Activated CD4-positive, alpha-beta T cell treated with anti-CD3 and anti-CD28 coated beads for 36 hours (primary cell): ENCODE measurements at regions of chr6 and their contacts with region 1.

Region 1: GRCh38 chr6:159325476-159325875 is 156.3 kb downstream of the FNDC1 start:
- DNase-seq: no peak
- ATAC-seq: no peak
- H3K4me3 Mint-ChIP-seq: no peak overlapping the region
- H3K27ac Mint-ChIP-seq: no peak overlapping the region
- H3K4me1 Mint-ChIP-seq: no peaks in the 10 kb centered on the region
- H3K27me3 Mint-ChIP-seq: peaks cover 5% of the 10 kb centered on the region

Region 2: GRCh38 chr6:159533016-159533415 is 207.5 kb after region 1 on chr6:
- CTCF ChIA-PET with region 1: no interaction called
- POLR2A ChIA-PET with region 1: interaction called, 16 read pairs
- intact Hi-C with region 1: no loop called
- DNase-seq: no peak
- ATAC-seq: no peak
- H3K4me3 Mint-ChIP-seq: no peak overlapping the region
- H3K27ac Mint-ChIP-seq: no peak overlapping the region
- H3K4me1 Mint-ChIP-seq: no peaks in the 10 kb centered on the region
- H3K27me3 Mint-ChIP-seq: peaks cover 3% of the 10 kb centered on the region